ENCODE measurements at regions of chr2 and their contacts with region 1.

Region 1: GRCh38 chr2:39513641-39514094 is 76.6 kb upstream of the MAP4K3 start:
- DNase-seq: peak; percentile 30
- H3K4me3 Mint-ChIP-seq: no peak overlapping the region
- H3K27ac Mint-ChIP-seq: peak overlapping the region; percentile 54
- H3K4me1 Mint-ChIP-seq: peaks cover 50% of the 10 kb centered on the region
- H3K27me3 Mint-ChIP-seq: peaks cover 2% of the 10 kb centered on the region

Region 2: GRCh38 chr2:39379643-39380524 is 133.8 kb before region 1 on chr2:
- intact Hi-C with region 1: loop called (anchors 1 kb)
- DNase-seq: no peak
- H3K4me3 Mint-ChIP-seq: no peak overlapping the region
- H3K27ac Mint-ChIP-seq: no peak overlapping the region
- H3K4me1 Mint-ChIP-seq: peaks cover 31% of the 10 kb centered on the region
- H3K27me3 Mint-ChIP-seq: no peaks in the 10 kb centered on the region

Region 3: DNA sequence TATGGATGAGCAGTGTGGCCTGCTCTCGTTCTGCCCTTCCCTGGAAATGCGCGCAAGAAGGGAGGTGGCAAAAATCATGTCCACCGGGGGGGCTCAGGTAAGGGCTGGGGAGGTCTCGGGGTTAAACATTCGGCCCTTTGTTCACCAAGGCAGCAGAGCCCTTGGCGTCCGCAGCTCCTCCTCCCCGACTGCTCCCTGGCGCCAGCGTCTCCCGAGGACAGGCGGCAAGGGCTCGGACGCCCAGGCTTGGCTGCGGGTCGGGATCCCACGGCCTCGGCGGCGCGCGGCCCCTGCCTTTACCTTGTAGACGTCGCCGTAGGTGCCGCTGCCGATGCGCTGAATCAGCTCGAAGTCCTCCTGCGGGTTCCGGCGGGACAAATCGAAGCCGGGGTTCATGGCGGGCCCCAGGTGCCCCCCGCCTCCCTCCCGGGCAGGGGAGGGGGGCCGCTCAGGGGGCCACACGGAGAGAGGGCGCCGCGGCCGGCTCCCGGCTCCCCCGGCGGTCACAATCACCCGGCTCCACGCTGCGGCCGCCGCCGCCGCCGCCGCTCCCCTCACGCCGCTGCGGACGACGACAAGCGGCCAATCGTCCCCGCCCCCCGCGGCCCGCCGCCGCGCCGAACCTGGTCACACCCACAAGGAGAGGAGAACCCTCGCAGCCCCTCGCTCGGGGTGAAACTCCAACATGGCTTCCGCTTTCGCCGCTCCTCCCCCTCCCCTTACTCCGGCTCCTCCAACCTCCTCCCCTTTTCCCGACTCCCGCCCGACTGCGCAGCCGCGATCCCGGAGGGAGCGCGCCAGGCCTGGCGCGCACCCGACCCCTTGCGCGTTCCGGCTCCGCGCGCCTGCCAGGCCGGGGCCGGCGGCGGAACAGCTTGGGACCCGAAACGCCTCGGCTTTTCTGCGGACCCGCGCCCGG is 76.8 kb before region 1 on chr2 and contains the start of gene MAP4K3:
- intact Hi-C with region 1: loop called (anchors 1 kb)
- DNase-seq: peak; percentile 66
- H3K4me3 Mint-ChIP-seq: peak within 1 kb of the TSS; percentile 89
- H3K27ac Mint-ChIP-seq: peak within 1 kb of the TSS; percentile 83
- H3K4me1 Mint-ChIP-seq: peaks cover 41% of the 10 kb centered on the region
- H3K27me3 Mint-ChIP-seq: no peaks in the 10 kb centered on the region
- total RNA-seq, gene MAP4K3: 19.3 and 22.7 TPM in 2 replicates

Region 4: DNA sequence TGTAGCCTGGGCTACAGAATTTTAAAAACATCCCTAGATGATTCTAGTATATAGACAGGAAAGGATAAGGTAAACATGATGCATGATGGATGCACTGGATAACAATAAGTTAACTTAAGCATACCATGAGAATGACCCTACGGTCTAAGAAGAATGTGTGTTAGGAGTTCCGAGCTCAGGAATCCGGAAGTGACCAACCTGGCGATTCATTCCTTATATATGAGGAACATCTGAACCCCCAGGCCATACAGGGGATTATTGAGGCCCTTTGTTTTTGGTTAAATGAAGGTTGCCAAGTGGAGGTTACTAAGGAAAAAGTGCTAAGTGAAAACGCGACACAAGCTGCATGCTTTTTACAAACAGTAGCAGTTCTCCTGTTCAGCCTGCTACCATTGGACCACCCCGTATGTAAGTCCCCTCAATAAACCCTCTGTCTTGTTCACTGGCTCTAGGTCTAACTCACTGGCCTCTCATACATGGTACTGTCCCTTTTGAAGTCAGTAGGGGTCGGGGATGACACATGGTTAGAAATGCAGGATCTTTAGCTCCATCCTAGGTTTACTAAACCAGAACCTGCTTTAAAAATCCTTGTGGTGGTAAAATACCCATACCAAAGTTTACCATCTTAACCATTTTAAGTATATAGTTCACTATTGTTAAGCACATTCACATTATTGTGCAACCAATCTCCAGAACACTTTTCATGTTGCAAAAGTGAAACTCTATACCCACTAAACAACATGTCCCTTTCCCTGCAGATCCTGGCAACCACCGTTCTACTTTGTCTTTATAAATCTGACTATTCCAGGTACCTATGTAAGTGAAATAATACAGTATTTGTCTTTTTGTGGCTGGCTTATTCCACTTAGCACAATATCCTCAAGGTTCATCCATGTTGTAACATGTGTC is 34.4 kb after region 1 on chr2:
- intact Hi-C with region 1: loop called (anchors 2 kb)
- DNase-seq: no peak
- H3K4me3 Mint-ChIP-seq: no peak overlapping the region
- H3K27ac Mint-ChIP-seq: no peak overlapping the region
- H3K4me1 Mint-ChIP-seq: peaks cover 18% of the 10 kb centered on the region
- H3K27me3 Mint-ChIP-seq: peaks cover 7% of the 10 kb centered on the region

Region 5: GRCh38 chr2:39642051-39642742 is 128.5 kb after region 1 on chr2:
- intact Hi-C with region 1: loop called (anchors 10 kb)
- DNase-seq: no peak
- H3K4me3 Mint-ChIP-seq: no peak overlapping the region
- H3K27ac Mint-ChIP-seq: no peak overlapping the region
- H3K4me1 Mint-ChIP-seq: no peaks in the 10 kb centered on the region
- H3K27me3 Mint-ChIP-seq: no peaks in the 10 kb centered on the region

Region 6: DNA sequence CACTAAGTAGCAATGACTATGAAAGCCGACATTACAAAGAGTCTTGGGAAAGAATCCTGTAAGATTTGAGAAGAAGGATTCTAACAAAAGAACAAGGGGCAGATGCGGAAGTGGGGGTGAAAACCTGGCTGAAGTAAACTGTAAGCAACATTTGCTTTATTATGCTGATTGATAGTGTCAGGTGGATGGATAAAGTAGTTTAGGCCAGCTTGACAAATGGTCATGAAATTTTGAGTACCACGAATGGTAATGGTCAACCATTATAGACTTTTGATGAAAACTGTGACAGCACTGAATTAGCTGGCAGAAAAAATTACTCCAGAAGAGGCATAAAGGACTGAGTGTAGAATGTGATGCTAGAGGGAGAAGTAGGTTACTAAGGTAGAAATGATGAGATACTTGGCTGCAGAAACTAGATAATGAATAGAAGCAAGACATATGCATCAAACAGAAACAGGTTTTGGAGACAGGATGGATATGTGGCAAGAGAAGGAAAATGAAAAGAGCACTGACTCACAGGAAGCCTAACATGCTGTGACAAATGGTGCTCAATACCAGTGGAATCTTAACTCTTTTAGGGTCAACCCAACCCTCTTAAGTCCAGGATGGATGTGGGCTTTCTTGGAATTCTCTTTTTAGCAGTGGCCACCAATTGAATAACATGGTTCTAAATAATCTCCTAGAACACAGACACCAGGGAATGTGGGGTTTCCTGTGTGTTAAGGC is 258.6 kb after region 1 on chr2:
- intact Hi-C with region 1: loop called (anchors 2 kb)
- DNase-seq: no peak
- H3K4me3 Mint-ChIP-seq: no peak overlapping the region
- H3K27ac Mint-ChIP-seq: peak overlapping the region; percentile 4
- H3K4me1 Mint-ChIP-seq: peaks cover 42% of the 10 kb centered on the region
- H3K27me3 Mint-ChIP-seq: no peaks in the 10 kb centered on the region

Measured in activated T-helper 2 cell treated with anti-CD3 and anti-CD28 coated beads, Interferon-gamma antibody, Interleukin-2, Interleukin-4, amounts not matched to agents 10 μg/mL and 5 μg/mL and 100 μg/mL, durations not matched to agents 14 hours and 24 hours and 36 hours (primary cell).